Endothelial cell of umbilical vein (primary cell): ENCODE measurements at regions of chr9 and their contacts with region 1.

Region 1: DNA sequence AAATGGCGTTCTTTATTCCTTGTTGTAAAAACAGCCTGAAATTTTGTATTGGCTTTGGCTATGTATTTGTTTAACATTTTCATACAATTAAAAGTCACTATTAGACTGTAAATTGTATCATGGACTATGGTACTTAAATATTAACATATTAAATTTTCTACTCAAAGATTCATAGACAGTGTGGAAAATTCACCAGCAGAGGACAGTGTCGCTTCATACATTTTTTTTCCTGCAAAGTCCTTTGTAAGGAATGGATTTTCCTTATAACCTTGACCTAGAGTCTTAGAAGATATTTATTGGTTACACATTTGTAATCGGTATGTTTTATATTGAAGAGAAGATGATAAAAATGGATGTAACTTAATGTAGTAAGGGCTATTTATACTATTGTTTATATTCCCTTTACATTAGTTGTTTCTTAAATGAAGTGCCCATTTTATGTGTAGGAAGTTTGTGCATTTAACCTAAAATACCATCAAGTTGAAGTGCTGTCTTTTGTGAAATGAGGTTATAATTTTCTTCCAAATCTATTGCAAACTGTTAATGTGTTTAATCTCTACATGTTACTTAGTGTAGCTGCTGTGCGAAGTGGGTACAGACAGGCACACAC is 150.1 kb downstream of the KDM4C start:
- DNase-seq: peak; percentile 64
- H3K4me3 ChIP-seq: no peak overlapping the region
- H3K27ac ChIP-seq: no peak overlapping the region
- H3K4me1 ChIP-seq: peaks cover 2% of the 10 kb centered on the region
- H3K27me3 ChIP-seq: no peaks in the 10 kb centered on the region
- CTCF ChIP-seq: peak; percentile 41 to 52
- POLR2A ChIP-seq: no peak

Region 2: GRCh38 chr9:6833518-6834192 is 74.2 kb before region 1 on chr9:
- CTCF ChIA-PET with region 1: no interaction called
- POLR2A ChIA-PET with region 1: no interaction called
- dilution Hi-C with region 1: no loop called
- intact Hi-C with region 1: no loop called
- DNase-seq: no peak
- H3K4me3 ChIP-seq: no peak overlapping the region
- H3K27ac ChIP-seq: no peak overlapping the region
- H3K4me1 ChIP-seq: no peaks in the 10 kb centered on the region
- H3K27me3 ChIP-seq: no peaks in the 10 kb centered on the region
- CTCF ChIP-seq: no peak
- POLR2A ChIP-seq: no peak

Region 3: DNA sequence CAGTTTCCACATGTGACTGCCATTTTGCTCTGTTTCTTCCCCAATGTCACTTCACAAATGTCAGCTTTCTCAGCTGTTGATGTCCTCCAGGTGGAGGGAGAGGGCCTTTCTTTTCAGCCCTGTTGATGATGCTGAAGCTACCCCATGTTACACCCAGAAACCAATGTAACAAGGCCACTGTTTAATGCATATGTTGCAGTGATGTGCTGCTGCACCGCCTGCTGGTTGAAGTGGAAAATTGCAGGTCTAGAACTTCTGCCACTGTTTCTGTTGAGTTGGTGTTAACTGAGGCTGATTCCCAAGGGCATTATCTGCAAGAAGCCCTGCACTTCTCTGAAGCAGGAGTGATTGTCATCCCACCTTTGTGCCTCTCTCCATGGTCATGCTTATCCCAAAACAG is 278.3 kb after region 1 on chr9:
- CTCF ChIA-PET with region 1: interaction called, 12 read pairs
- POLR2A ChIA-PET with region 1: no interaction called
- dilution Hi-C with region 1: no loop called
- intact Hi-C with region 1: loop called (anchors 1 kb)
- DNase-seq: peak; percentile 22
- H3K4me3 ChIP-seq: no peak overlapping the region
- H3K27ac ChIP-seq: no peak overlapping the region
- H3K4me1 ChIP-seq: peaks cover 8% of the 10 kb centered on the region
- H3K27me3 ChIP-seq: peaks cover 0 to 3% of the 10 kb centered on the region in 2 experiments
- CTCF ChIP-seq: peak; percentile 54 to 66
- POLR2A ChIP-seq: no peak

Region 4: GRCh38 chr9:7234143-7234542 is 326.3 kb after region 1 on chr9:
- CTCF ChIA-PET with region 1: interaction called, 9 read pairs
- POLR2A ChIA-PET with region 1: no interaction called
- dilution Hi-C with region 1: no loop called
- intact Hi-C with region 1: loop called (anchors 2 kb)
- DNase-seq: peak; percentile 43
- H3K4me3 ChIP-seq: no peak overlapping the region
- H3K27ac ChIP-seq: no peak overlapping the region
- H3K4me1 ChIP-seq: no peaks in the 10 kb centered on the region
- H3K27me3 ChIP-seq: peaks cover 0 to 2% of the 10 kb centered on the region in 2 experiments
- CTCF ChIP-seq: peak; percentile 57 to 65
- POLR2A ChIP-seq: no peak

Region 5: DNA sequence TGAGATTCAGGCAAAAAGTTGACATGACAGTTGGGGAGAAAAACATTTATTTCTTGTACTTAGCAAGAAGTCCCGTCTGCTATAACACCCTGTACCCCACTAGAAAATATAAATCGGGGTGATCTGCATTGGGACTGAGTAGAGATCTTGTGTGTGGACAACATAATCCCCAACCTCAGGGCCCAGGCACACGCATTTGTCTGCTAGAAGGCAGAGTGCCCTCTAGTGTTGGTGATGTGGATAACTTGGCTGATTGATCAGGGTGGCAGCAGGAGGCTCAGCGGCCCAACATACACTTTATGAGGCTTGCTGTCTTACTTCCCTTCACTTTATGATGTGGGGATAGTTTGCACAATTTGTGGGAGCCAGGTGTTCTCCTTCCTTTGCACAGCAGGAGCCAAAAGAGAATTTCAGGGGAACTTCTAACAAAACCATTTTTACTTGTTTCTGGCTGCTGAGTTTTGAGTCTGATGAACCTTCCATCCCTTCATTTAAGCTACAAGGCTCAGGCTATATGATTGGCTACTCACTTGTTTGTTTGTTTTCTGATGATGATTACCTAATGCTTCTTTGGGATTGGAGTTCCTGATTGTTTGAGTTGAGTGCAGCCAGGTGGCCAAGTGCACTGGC is 628.5 kb after region 1 on chr9:
- CTCF ChIA-PET with region 1: interaction called, 4 read pairs
- POLR2A ChIA-PET with region 1: no interaction called
- dilution Hi-C with region 1: no loop called
- intact Hi-C with region 1: loop called (anchors 1 kb)
- DNase-seq: peak; percentile 42
- H3K4me3 ChIP-seq: no peak overlapping the region
- H3K27ac ChIP-seq: no peak overlapping the region
- H3K4me1 ChIP-seq: no peaks in the 10 kb centered on the region
- H3K27me3 ChIP-seq: no peaks in the 10 kb centered on the region
- CTCF ChIP-seq: peak; percentile 50 to 69
- POLR2A ChIP-seq: no peak